Left cardiac atrium (tissue), 4 donors: ENCODE measurements at regions of chr9 and their contacts with region 1.

Region 1: GRCh38 chr9:98121058-98121457 is 2.0 kb upstream of the TRIM14 start:
- DNase-seq: no peak
- ATAC-seq: no peak

Region 2: DNA sequence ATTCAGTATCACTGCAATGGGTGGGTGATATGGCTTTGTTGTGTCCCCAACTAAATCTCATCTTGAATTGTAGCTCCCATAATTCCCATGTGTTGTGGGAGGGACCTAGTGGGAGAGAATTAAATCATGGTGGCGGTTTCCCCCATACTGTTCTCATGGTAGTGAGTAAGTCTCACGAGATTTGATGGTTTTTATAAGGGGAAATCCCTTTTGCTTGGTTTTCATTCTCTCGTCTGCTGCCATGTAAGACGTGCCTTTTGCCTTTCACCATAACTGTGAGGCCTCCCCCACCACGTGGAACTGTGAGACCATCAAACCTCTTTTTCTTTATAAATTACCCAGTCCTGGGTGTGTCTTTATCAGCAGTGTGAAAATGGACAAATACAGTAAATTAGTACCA is 74.1 kb before region 1 on chr9:
- intact Hi-C with region 1: no loop called
- DNase-seq: no peak
- ATAC-seq: no peak

Region 3: DNA sequence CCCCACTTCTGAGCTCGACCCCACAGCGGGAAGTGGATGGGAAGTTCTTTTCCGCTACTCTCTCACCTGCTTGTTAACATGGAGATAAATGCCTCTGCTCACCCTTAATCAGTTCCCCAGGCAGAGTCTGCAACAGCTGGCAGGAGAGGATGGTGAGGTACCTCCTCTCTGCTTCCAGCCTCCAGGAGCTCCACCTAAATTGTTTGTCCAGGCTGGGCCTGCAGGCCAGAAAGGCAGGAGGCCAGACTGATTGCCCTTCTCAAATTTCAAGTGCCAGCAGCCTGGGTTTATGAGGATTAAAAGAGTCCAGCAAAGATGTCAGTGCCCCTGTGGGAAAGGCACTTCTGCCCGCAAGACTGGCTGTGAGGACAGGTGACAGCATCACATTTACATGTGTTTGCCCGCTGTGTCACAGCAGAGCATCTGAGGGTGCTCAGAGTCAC is 51.5 kb after region 1 on chr9:
- intact Hi-C with region 1: loop called in 1 of 2 experiments (anchors 5 kb)
- DNase-seq: no peak
- ATAC-seq: no peak